Activated T-helper 1 cell treated with anti-CD3 and anti-CD28 coated beads, Interleukin-12 subunit alpha, Interleukin-12 subunit beta, Interleukin-2, Interleukin-4 antibody, amounts not matched to agents 30 ng/mL and 10 ng/mL and 1 ng/mL, durations not matched to agents 14 hours and 24 hours and 36 hours (primary cell): ENCODE measurements at regions of chr7 and their contacts with region 1.

Region 1: GRCh38 chr7:102464577-102465280 is at the starts of genes ALKBH4 and LRWD1:
- DNase-seq: peak; percentile 92
- H3K4me3 Mint-ChIP-seq: peak within 1 kb of the TSS; percentile 94
- H3K27ac Mint-ChIP-seq: peak within 1 kb of the TSS; percentile 69
- H3K4me1 Mint-ChIP-seq: peaks cover 27% of the 10 kb centered on the region
- H3K27me3 Mint-ChIP-seq: no peaks in the 10 kb centered on the region
- total RNA-seq, gene ALKBH4: 10.7 and 11.2 TPM in 2 replicates
- total RNA-seq, gene LRWD1: 32.9 and 36.3 TPM in 2 replicates

Region 2: GRCh38 chr7:101436857-101437576 is 1027.7 kb before region 1 on chr7:
- intact Hi-C with region 1: no loop called
- DNase-seq: no peak
- H3K4me3 Mint-ChIP-seq: no peak overlapping the region
- H3K27ac Mint-ChIP-seq: no peak overlapping the region
- H3K4me1 Mint-ChIP-seq: peaks cover 4% of the 10 kb centered on the region
- H3K27me3 Mint-ChIP-seq: peaks cover 15% of the 10 kb centered on the region

Region 3: DNA sequence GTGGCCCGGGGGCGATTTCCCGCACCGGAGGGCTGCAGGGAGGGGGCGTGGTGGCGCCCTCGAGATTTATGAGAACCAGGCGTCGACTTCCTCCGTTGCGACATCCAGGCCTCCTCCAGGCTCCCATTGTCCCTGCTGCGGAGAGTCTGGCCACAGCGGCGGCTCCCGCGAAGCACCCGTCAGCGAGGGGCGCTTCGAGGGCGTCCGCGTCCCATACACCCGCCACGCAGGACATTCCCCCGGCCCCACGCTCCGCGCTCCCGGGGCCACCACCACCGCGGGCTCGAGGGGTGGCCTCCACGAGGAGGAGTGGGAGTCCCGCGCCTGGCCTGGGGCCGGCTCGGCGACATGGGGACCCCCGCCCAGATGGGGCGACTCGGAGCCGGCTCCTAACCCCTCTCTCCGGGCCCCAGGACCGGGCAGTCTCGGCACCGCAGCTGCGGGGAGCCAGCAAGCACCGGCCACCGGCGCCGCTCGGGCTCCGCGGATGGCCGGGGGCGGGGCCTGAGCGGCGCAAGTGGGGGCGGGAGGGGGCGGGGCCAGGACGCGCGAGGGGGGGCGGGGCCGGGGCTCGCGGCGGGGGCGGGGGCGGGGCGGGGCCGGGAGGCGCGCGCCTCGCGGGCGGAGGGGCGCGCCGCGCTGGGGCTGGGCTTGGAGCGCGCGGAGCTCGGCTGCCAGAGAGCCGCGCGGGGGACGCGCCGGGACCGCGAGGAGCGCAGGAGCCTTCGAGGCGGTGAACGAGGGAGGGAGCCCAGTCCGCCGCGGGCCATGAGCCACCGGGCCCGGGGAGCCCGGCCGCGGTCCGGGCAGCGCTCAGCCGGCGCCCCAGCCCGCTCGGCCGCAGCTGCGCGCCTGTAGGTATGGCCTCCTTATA is 178.3 kb before region 1 on chr7 and contains the start of gene SH2B2:
- intact Hi-C with region 1: loop called (anchors 5 kb)
- DNase-seq: no peak
- H3K4me3 Mint-ChIP-seq: peak within 1 kb of the TSS; percentile 47
- H3K27ac Mint-ChIP-seq: no peak within 1 kb of the TSS
- H3K4me1 Mint-ChIP-seq: peaks cover 22% of the 10 kb centered on the region
- H3K27me3 Mint-ChIP-seq: peaks cover 28% of the 10 kb centered on the region
- total RNA-seq, gene SH2B2: 2.1 and 2.6 TPM in 2 replicates

Region 4: DNA sequence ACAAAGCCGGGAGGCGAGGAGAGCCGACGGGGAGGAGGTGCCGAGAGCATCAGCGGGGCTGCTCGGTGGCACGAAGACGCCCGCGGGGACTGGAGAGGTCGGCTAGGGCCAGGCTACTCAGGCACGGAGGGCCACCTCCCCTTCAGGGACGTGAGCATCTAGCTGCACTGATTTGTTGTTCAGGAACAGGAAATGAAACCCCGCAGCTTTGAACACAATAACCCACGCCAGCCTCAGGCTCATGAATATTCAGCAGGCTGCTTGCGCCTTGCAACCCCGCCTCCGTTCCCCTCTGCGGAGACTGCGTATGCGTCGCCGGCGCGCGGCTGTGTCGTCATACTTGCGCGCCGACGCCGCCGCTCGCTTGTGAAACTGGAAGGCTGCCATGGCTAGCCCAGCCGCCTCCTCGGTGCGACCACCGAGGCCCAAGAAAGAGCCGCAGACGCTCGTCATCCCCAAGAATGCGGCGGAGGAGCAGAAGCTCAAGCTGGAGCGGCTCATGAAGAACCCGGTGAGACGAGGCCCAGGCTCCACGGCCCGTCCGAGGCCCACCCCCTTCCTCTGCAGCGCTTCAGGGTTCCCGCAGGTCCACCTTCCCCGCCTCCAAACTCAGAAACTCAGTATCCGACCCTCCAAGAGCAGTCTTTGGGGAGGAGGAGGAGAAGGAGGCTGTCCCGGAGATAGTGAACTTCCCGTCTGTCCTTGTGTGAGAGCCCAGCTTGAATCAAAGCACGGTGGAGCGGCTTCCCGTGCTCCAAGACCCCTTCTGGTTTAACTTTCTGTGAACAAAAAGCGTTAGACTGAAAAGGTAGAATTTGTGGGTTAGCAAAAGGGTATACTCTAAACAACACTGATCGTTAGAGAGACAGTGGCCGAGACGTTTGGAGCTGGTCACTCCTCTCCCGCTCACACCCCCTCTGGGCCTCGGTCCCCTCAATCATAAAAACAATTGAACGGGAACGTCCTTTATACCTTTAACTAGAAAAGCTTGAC is 68.4 kb before region 1 on chr7 and contains the start of gene PRKRIP1:
- intact Hi-C with region 1: loop called (anchors 1 kb)
- DNase-seq: peak; percentile 80
- H3K4me3 Mint-ChIP-seq: peak within 1 kb of the TSS; percentile 87
- H3K27ac Mint-ChIP-seq: peak within 1 kb of the TSS; percentile 70
- H3K4me1 Mint-ChIP-seq: peaks cover 15% of the 10 kb centered on the region
- H3K27me3 Mint-ChIP-seq: no peaks in the 10 kb centered on the region
- total RNA-seq, gene PRKRIP1: 25.7 and 28.3 TPM in 2 replicates

Region 5: DNA sequence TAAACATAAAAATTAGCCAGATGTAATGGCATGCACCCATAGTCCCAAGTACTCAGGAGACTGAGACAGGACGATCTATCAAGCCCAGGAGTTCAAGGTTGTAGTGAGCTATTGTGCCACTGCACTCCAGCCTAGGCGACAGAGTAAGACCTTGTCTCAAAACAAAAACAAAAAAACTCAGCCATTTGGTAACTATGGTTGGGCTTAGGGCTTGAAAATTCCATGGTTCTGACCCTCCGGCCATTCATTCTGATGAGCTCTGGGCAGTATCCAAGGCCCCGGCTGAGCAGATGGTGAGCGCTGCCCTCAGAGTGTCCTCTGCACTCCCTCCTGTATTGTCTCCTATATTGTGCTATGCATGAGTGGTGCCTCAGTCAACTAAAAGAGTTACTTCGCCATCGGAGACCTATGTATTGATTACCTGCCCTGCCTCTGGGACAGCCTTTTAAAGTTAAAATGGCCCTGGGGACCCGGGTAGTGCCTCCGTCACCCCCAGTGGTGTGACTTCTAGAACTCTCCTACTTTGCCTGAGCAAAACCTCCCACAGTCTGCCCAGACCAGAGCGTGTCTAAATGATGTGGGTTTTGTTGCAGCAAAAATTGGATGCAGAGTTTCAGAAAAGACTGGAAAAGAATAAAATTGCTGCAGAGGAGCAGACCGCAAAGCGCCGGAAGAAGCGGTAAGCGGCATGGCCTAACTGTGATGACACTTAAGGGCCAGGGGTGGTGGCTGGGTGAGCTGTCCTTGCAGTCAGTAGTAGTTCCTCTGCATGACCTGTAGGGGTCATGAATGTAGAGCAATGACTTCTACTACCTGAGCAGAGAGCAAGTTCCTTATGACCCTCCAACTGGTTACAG is 60.5 kb before region 1 on chr7:
- intact Hi-C with region 1: loop called (anchors 1 kb)
- DNase-seq: peak; percentile 27
- H3K4me3 Mint-ChIP-seq: no peak overlapping the region
- H3K27ac Mint-ChIP-seq: no peak overlapping the region
- H3K4me1 Mint-ChIP-seq: no peaks in the 10 kb centered on the region
- H3K27me3 Mint-ChIP-seq: no peaks in the 10 kb centered on the region

Region 6: GRCh38 chr7:102412548-102412947 is 52.2 kb before region 1 on chr7:
- intact Hi-C with region 1: loop called (anchors 1 kb)
- DNase-seq: no peak
- H3K4me3 Mint-ChIP-seq: no peak overlapping the region
- H3K27ac Mint-ChIP-seq: no peak overlapping the region
- H3K4me1 Mint-ChIP-seq: peaks cover 40% of the 10 kb centered on the region
- H3K27me3 Mint-ChIP-seq: no peaks in the 10 kb centered on the region

Region 7: GRCh38 chr7:102425639-102426267 is 39.0 kb before region 1 on chr7:
- intact Hi-C with region 1: loop called (anchors 2 kb)
- DNase-seq: peak; percentile 83
- H3K4me3 Mint-ChIP-seq: peak overlapping the region; percentile 86
- H3K27ac Mint-ChIP-seq: peak overlapping the region; percentile 100
- H3K4me1 Mint-ChIP-seq: peaks cover 68% of the 10 kb centered on the region
- H3K27me3 Mint-ChIP-seq: no peaks in the 10 kb centered on the region

Region 8: GRCh38 chr7:102433219-102434038 is 31.3 kb before region 1 on chr7 and contains the start of gene ORAI2:
- intact Hi-C with region 1: loop called (anchors 1 kb)
- DNase-seq: peak; percentile 82
- H3K4me3 Mint-ChIP-seq: peak within 1 kb of the TSS; percentile 84
- H3K27ac Mint-ChIP-seq: peak within 1 kb of the TSS; percentile 87
- H3K4me1 Mint-ChIP-seq: peaks cover 58% of the 10 kb centered on the region
- H3K27me3 Mint-ChIP-seq: no peaks in the 10 kb centered on the region
- total RNA-seq, gene ORAI2: 55.2 and 59.9 TPM in 2 replicates

Region 9: GRCh38 chr7:103962070-103962469 is 1497.3 kb after region 1 on chr7:
- intact Hi-C with region 1: no loop called
- DNase-seq: no peak
- H3K4me3 Mint-ChIP-seq: no peak overlapping the region
- H3K27ac Mint-ChIP-seq: no peak overlapping the region
- H3K4me1 Mint-ChIP-seq: no peaks in the 10 kb centered on the region
- H3K27me3 Mint-ChIP-seq: peaks cover 3% of the 10 kb centered on the region